ENCODE measurements at regions of chr1 and their contacts with region 1.

Region 1: GRCh38 chr1:84620720-84621313 is 46.6 kb upstream of the CTBS start:
- DNase-seq: peak in 1 of 2 donors; percentile 84
- H3K4me3 ChIP-seq: peak overlapping the region; percentile 72 to 76
- H3K27ac ChIP-seq: peak overlapping the region in 1 of 2 donors; percentile 42
- H3K4me1 ChIP-seq: peaks cover 0 to 13% of the 10 kb centered on the region in 2 donors
- H3K27me3 ChIP-seq: no peaks in the 10 kb centered on the region
- CTCF ChIP-seq: peak; percentile 87 to 96 (median 96)

Region 2: GRCh38 chr1:84605157-84605556 is 15.7 kb before region 1 on chr1:
- intact Hi-C with region 1: no loop called
- DNase-seq: no peak
- H3K4me3 ChIP-seq: no peak overlapping the region
- H3K27ac ChIP-seq: peak overlapping the region; percentile 30 to 94
- H3K4me1 ChIP-seq: peaks cover 0 to 5% of the 10 kb centered on the region in 2 donors
- H3K27me3 ChIP-seq: no peaks in the 10 kb centered on the region
- CTCF ChIP-seq: no peak

Region 3: DNA sequence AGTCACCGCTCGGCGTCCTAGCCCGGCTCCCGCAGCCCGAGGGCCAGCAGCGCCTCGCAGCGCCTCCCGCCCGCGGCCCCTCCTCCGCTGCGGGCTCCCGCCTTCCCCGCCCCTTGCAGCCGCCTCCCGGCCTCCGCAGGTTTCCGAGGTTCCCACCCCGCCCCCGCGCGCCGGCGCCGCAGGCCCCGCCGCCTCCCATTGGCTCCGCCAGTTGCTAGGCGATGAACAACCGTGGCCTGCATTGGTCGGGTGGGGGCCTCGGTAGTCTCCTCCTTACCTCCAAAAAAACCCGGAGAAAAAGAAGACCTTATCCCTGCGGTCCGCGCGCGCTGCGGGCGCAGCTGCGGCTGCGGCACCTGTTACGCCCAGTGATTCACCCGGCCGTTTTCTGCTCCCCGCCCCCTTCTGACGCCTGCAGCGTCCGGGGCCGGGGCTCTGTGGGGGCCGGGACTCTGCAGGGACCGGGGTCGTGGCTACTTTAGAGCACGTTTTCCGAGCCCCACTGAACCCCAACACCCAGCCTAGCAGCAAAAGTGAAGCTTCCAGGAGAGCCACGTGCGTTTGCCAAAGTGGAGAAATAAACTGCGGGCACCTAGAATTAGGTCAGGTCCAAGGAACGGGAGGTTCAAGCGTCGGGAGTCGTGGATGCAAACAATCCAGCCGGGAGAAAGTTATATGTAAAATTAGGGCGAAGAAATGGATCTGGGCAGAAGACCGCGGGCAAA is 69.7 kb after region 1 on chr1 and contains the start of gene SSX2IP:
- intact Hi-C with region 1: loop called (anchors 2 kb)
- DNase-seq: peak; percentile 93 to 98
- H3K4me3 ChIP-seq: peak within 1 kb of the TSS; percentile 70 to 93
- H3K27ac ChIP-seq: peak within 1 kb of the TSS; percentile 70 to 80
- H3K4me1 ChIP-seq: peaks cover 0 to 13% of the 10 kb centered on the region in 2 donors
- H3K27me3 ChIP-seq: no peaks in the 10 kb centered on the region
- CTCF ChIP-seq: no peak
- total RNA-seq, gene SSX2IP: 2.3 TPM

Region 4: GRCh38 chr1:84810343-84810742 is 189.5 kb after region 1 on chr1:
- intact Hi-C with region 1: no loop called
- DNase-seq: no peak
- H3K4me3 ChIP-seq: no peak overlapping the region
- H3K27ac ChIP-seq: no peak overlapping the region
- H3K4me1 ChIP-seq: no peaks in the 10 kb centered on the region
- H3K27me3 ChIP-seq: no peaks in the 10 kb centered on the region
- CTCF ChIP-seq: no peak

Measured in ascending aorta (tissue), 2 donors.